GM18951 (cell line): ENCODE measurements at regions of chr10 and their contacts with region 1.

Region 1: DNA sequence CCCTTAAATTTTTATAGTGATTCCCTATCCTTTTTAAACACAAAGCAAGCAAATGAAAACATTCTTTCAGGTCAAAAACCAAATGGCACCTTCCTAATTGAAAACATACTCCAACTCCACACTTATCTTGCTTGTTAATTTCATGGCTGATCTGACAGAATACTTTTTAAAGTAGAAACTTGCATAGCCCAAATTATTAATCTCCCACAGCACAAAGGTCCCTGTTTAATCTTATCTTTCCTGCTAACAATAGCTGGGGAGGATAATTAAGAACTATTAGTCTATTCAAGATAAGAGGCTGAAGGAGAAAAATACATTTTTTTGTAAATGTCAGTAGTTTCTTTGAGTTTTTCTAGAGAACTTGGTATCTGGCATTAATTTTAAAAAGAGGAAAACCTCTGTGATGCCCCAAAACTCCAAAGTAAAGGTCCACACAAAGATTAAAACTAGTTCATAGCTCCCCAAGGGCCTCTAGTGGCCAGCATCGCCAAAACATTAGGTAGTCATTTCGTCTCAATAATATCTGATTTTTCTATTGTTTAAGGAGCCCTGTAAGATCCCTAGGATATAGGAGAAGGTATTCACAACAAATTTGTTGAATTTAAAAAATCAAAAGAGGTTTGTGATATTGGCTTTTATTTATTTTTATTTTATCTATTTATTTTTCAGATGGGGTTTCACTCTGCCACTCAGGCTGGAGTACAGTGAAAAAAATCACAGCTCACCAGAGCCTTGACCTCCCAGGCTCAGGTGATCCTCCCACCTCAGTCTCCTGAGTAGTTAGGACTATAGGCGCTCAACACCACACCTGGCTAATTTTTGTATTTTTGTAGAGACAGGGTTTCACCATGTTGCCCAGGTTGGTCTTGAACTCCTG is 14.7 kb downstream of the CDNF start:
- POLR2A ChIP-seq: no peak

Region 2: GRCh38 chr10:14507176-14507575 is 315.9 kb before region 1 on chr10:
- in situ Hi-C with region 1: loop called (anchors 25 kb)
- POLR2A ChIP-seq: no peak

Region 3: DNA sequence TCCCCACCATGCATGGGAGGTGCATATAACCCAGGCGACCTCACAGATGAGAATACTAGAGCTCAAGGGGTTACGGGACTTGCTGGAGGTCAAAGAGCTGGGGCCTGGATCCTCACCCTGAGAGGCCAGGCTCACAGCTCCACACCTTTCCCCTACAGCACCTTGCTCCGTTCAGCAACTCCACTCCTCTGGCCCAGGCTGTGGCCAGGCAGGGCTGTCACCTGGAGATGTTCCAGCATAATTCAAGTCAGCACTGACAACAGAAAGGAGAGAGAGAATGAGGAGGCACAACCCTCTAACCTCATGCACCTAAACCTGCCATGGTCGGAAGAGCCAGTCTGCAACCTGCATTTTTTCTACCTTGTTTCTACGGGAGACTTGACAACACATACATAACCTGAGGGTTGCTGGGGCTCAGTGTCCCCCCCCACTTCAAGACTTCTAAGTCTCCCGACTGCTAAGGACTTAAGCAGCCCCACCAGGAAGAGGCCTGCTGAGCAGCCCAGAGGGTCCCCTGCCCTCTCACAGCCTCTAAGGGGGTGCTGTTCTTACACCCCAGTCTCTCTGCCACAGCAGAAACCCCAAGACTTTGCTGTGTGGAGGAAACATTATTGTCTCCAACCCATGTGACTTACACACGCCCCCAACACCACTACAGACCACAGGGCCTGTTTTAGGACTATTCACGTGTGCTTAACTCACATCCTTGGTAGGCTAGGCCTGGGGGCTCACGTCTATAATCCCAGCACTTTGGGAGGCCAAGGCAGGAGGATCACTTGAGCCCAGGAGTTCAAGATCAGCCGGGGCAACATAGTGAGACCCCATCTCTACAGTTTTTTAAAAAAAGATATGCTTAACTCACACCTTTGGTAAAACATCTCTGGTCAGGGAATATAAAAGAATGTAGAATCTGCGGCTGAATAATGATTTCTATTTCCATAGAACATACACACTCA is 224.0 kb before region 1 on chr10:
- in situ Hi-C with region 1: loop called (anchors 10 kb)
- POLR2A ChIP-seq: no peak